ENCODE measurements at regions of chr11 and their contacts with region 1.

Region 1: DNA sequence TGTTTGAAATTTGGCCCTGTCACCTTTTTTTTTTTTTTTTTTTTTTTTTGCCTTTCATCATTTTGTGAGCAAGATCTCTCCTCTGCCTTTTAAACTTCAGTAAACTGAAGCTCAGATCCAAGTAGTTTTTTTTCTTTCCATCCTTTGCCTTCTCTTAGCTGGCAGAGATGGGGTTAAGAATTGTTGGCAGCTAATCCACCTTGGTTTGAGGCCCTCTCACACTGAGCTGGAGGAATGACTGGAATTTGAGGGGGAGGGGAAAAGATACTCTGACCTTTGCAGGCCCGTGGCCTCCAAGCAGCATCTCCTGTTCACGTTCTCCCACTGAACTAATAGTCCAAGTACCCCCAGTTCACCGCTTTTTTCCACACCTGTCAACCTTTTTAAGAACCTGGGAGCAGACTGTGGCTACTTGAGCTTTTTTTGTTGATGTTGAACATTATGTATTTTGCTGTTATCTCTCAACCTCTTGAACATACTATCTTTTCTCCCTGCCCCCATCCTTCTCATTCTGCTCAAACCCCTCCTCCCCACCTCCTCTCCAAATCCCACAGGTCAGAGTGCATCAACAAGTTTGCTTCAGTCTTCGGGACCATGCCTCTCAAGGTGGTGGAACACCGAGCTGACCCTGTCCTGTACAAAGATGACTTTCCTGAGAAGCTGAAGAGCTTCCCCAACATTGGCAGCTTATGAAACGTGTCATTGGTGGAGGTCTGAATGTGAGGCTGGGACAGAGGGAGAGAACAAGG is 66.2 kb downstream of the ALX4 start:
- DNase-seq: no peak
- H3K4me3 ChIP-seq: no peak overlapping the region
- H3K27ac ChIP-seq: no peak overlapping the region
- H3K27me3 ChIP-seq: no peaks in the 10 kb centered on the region
- CTCF ChIP-seq: no peak

Region 2: GRCh38 chr11:44065161-44065571 is 178.6 kb before region 1 on chr11:
- CTCF ChIA-PET with region 1: no interaction called
- POLR2A ChIA-PET with region 1: no interaction called
- DNase-seq: no peak
- H3K4me3 ChIP-seq: no peak overlapping the region
- H3K27ac ChIP-seq: no peak overlapping the region
- H3K27me3 ChIP-seq: peaks cover 9% of the 10 kb centered on the region
- CTCF ChIP-seq: no peak

Region 3: GRCh38 chr11:44158384-44158783 is 85.4 kb before region 1 on chr11:
- CTCF ChIA-PET with region 1: no interaction called
- POLR2A ChIA-PET with region 1: interaction called, 16 read pairs
- DNase-seq: no peak
- H3K4me3 ChIP-seq: no peak overlapping the region
- H3K27ac ChIP-seq: no peak overlapping the region
- H3K27me3 ChIP-seq: no peaks in the 10 kb centered on the region
- CTCF ChIP-seq: no peak

Region 4: GRCh38 chr11:44258190-44258489 is 14.4 kb after region 1 on chr11:
- CTCF ChIA-PET with region 1: interaction called, 3 read pairs
- POLR2A ChIA-PET with region 1: interaction called, 11 read pairs
- DNase-seq: no peak
- H3K4me3 ChIP-seq: no peak overlapping the region
- H3K27ac ChIP-seq: no peak overlapping the region
- H3K27me3 ChIP-seq: no peaks in the 10 kb centered on the region
- CTCF ChIP-seq: no peak

Region 5: DNA sequence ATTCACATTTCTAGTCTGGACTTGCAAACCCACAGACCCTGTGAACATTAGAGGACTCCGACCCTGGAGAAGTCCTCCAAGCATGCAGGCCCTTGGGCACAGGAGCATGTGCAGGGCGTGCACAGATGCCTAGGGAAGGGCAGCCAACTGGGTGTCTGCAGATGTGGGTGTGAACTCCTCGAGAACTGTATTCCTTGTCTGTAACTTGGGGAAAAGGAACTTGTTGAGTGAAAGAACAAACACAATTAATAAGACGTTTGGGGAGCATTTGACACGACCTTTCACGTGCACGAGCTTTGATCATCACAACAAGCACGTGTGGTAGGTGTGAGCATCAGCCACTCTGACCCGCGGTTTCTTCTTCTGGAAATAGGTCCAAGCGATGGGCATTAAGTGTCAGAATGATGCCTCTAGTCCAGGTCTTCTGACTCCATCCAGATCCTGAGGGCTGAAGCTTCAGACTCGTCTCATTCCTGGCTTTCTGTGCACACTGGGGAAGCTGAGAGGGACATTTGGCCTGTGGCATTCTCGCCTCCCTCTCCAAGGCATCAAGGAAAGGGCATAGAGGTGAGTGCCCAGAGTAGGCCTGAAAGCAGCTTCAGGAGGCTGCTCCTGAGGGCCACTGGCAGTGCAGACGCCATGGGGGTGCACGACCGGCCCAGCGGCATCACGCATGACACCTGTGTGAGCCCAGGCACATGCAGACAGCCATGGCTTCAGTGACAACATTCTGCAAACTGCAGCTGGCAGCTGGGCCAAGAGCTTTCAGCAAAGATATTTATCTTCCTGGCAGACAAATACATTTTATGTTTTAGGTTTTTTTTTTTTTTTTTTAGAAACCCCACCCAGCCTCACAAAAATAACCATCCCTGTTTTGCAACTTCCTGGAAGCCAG is 33.7 kb after region 1 on chr11:
- CTCF ChIA-PET with region 1: no interaction called
- POLR2A ChIA-PET with region 1: no interaction called
- DNase-seq: no peak
- H3K4me3 ChIP-seq: no peak overlapping the region
- H3K27ac ChIP-seq: no peak overlapping the region
- H3K27me3 ChIP-seq: peaks cover 13% of the 10 kb centered on the region
- CTCF ChIP-seq: no peak

Measured in AG04450 (cell line).